Naive thymus-derived CD8-positive, alpha-beta T cell (primary cell): ENCODE measurements at regions of chr6 and their contacts with region 1.

Region 1: GRCh38 chr6:148760568-148761526 is 14.0 kb downstream of the UST start:
- DNase-seq: peak in 9 of 10 donors; percentile 7 to 76 (median 56)
- ATAC-seq: peak; percentile 69
- H3K4me3 Mint-ChIP-seq: peak overlapping the region; percentile 69 to 87 (median 79)
- H3K27ac Mint-ChIP-seq: peak overlapping the region; percentile 78 to 97 (median 92)
- H3K4me1 Mint-ChIP-seq: peaks cover 20 to 81% (median 43%) of the 10 kb centered on the region in 4 donors
- H3K27me3 Mint-ChIP-seq: peaks cover 0 to 14% (median 1%) of the 10 kb centered on the region in 5 donors

Region 2: DNA sequence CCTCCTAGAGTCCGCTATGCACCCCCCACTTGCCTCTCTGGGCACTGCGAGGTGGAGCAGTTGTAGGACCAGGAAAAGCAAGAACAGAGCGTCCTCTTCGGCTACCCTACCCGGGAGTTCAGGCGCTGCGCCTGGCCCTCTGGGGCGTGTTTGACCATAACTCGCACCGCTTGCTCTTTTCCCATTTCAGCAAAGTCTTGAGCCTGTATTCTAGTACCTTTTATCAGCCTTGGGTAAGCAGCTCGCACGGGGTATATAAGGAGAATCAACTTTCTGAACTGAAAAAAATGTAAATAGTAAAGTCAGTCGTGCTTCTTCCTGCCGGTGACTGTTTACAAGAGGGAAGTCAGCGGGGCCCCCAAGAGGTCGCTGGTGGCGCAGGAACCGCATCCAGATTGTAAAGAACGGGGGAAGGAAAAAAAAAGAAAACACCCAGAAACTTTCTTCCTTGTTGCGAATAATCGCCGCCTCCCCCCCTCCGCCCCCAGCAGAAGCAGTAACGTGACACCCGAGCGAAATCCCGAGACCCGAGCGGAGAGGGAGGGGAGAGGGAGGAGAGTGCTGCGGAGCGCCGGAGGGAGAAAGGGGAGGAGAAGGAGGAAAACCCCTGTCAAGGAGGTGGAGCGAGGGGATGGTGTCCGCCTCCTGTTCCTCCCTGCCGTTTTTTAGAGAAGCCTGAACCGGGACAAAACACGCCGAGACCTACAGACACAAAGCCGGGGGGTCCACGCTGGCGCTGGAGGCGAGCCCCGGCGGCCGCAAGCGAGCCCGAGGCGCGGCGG is 14.3 kb before region 1 on chr6 and contains the start of gene UST:
- POLR2A ChIA-PET with region 1: interaction called, 14 read pairs
- DNase-seq: peak; percentile 36 to 79 (median 62)
- ATAC-seq: peak; percentile 61 to 63
- H3K4me3 Mint-ChIP-seq: peak within 1 kb of the TSS; percentile 92 to 99 (median 96)
- H3K27ac Mint-ChIP-seq: peak within 1 kb of the TSS; percentile 58 to 94 (median 90)
- H3K4me1 Mint-ChIP-seq: peaks cover 11 to 28% (median 21%) of the 10 kb centered on the region in 4 donors
- H3K27me3 Mint-ChIP-seq: peaks cover 19 to 63% (median 41%) of the 10 kb centered on the region in 5 donors
- polyA plus RNA-seq, gene UST: 0.08 to 1.4 (median 0.26) TPM

Region 3: GRCh38 chr6:148771205-148771601 is 10.4 kb after region 1 on chr6:
- POLR2A ChIA-PET with region 1: interaction called, 13 read pairs
- DNase-seq: no peak
- ATAC-seq: peak; percentile 52 to 55
- H3K4me3 Mint-ChIP-seq: peak overlapping the region in 7 of 10 donors; percentile 0 to 75 (median 42)
- H3K27ac Mint-ChIP-seq: peak overlapping the region in 5 of 10 donors; percentile 32 to 70 (median 63)
- H3K4me1 Mint-ChIP-seq: peaks cover 7 to 40% (median 27%) of the 10 kb centered on the region in 4 donors
- H3K27me3 Mint-ChIP-seq: peaks cover 0 to 5% (median 1%) of the 10 kb centered on the region in 5 donors

Region 4: GRCh38 chr6:149129371-149130077 is 368.7 kb after region 1 on chr6:
- POLR2A ChIA-PET with region 1: no interaction called
- DNase-seq: no peak
- ATAC-seq: no peak
- H3K4me3 Mint-ChIP-seq: peak overlapping the region in 2 of 10 donors; percentile 26 to 57
- H3K27ac Mint-ChIP-seq: peak overlapping the region; percentile 72 to 98 (median 90)
- H3K4me1 Mint-ChIP-seq: peaks cover 34 to 62% (median 54%) of the 10 kb centered on the region in 4 donors
- H3K27me3 Mint-ChIP-seq: no peaks in the 10 kb centered on the region